ENCODE measurements at regions of chr7 and their contacts with region 1.

Region 1: DNA sequence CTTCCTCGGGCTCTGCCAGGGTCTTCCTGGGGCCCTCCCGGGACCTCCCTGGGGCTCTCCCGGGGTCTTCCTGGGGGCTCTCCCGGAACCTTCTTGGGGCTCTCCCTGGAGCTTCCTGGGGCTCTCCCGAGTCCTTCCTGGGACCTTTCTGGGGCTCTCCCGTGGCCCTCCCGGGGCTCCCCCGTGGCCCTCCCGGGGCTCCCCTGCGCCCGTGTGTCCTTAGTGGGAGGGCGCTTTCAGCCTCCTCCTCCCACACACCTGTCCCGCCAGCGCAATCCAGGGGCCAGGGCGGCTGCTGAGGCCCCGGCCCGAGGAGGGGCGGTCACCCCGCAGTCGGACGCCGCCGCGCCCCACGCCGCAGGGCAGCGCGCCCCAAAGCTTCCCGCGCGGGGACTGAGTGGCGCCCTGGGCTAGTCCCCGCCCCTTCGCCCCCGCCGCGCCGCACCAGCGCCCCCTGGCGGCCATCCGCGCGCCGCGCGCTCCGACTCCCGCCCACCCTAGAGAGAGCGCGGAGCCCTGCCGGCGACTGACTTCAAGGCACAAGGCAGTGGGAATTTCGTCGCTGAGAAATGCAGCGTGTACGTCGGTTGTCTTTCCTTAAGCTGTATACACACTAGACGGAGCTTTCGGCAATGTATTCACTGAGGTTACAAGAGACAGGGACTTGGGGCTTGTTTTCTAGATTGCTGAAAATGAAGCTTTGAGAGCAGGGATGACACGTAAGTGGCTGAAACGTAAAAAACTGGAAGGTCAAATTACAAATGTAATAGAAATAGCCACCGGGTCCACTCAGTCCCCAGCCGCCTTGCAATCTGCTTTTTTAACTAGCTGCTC is 47.1 kb downstream of the INSIG1 start:
- DNase-seq: peak; percentile 83
- H3K4me3 Mint-ChIP-seq: peak overlapping the region; percentile 55
- H3K27ac Mint-ChIP-seq: no peak overlapping the region
- H3K4me1 Mint-ChIP-seq: peaks cover 5% of the 10 kb centered on the region
- H3K27me3 Mint-ChIP-seq: peaks cover 41% of the 10 kb centered on the region

Region 2: GRCh38 chr7:155119801-155120382 is 224.9 kb before region 1 on chr7:
- CTCF ChIA-PET with region 1: no interaction called
- DNase-seq: no peak
- H3K4me3 Mint-ChIP-seq: no peak overlapping the region
- H3K27ac Mint-ChIP-seq: no peak overlapping the region
- H3K4me1 Mint-ChIP-seq: no peaks in the 10 kb centered on the region
- H3K27me3 Mint-ChIP-seq: peaks cover 13% of the 10 kb centered on the region

Region 3: DNA sequence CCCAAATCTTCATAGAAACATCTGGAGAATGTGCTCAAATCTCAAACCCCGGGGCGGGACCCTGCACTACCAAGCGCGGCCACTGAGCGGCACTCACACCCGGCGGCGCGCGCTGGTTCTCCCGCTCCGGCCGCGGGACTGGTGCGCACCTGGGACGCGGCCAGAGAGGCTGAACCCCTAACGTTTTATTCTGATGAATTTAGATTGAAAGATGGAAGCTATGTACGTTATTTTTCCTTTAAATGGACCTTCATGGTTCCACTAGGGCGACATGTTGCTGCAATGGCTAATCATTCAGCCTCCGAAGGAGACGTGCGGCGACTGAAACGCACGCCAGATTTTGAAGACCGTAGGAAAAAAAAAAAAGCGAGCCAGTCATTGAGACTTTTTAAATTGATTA is 154.1 kb before region 1 on chr7:
- CTCF ChIA-PET with region 1: interaction called, 16 read pairs
- DNase-seq: peak; percentile 62
- H3K4me3 Mint-ChIP-seq: no peak overlapping the region
- H3K27ac Mint-ChIP-seq: no peak overlapping the region
- H3K4me1 Mint-ChIP-seq: peaks cover 9% of the 10 kb centered on the region
- H3K27me3 Mint-ChIP-seq: peaks cover 48% of the 10 kb centered on the region

Region 4: DNA sequence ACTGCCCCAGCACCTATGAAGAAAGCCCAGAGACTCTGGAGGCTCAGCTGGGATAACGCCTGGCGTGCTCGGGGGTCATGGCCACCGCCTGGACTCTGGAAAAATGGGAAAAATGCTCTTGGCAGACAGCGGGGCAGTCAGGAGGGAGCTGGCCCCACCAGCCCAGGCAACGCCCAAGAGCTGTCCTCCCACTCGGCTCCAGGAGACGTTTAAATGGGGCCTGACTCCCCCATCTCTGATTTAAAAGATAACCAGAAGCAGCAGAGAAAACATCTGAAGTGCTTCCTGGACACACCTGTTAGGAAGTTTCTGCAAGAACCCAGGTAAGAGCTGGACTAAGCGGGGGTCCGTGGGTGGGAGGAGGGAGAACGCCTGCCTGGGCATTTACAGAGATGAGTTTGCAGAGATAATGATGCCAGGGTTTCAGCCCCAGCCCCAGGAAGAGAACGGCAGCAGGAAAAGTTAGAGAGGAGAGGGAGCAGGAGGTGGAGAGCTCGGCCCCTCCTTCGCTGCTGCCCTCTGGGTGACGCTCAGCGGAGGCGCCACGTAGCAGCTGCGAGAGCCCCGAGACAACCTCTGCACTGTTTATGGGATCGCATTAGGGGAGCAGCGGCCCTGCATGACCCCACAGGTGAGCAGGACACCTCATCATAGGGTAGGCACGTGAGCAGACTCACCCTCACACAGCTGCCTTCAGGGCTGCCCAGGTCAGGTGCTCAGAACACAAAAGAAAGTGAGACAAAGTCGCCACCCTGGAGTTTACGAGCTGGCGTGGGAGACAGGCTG is 130.7 kb before region 1 on chr7:
- CTCF ChIA-PET with region 1: no interaction called
- DNase-seq: no peak
- H3K4me3 Mint-ChIP-seq: no peak overlapping the region
- H3K27ac Mint-ChIP-seq: no peak overlapping the region
- H3K4me1 Mint-ChIP-seq: no peaks in the 10 kb centered on the region
- H3K27me3 Mint-ChIP-seq: peaks cover 43% of the 10 kb centered on the region

Region 5: DNA sequence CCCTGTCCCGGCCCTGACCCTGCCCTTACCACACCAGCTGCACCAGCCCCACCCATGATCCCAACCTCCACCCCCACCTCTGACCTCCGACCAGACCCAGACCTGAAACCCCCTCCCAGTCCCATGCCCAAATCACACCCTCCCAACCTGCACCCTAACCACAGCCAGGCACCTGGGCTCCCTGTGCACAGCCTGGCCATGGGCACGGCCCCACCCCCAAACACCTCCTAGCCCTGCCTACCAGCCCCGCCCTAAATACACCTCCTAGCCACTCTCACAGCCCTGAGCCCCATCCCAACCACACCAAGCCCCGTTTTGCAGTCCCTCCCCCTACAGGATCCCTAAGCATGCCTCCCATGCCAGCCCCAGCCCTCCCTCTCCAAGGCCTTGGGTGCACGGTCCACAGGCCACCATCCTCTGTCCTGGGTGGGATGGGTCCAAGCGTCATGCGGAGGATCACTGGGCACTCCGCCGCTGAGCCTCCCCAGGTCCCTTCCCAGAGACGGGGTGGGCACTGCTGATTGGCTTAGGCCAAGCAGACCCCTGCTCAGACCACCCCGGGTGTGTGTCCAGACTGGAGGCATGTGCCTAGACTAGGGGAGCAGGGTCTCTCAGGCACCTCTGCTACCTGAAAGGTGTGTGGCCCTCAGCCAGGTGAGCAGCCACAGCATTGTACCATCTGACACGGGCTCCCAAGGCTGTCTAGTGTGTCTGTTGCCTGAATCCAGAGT is 17.1 kb before region 1 on chr7:
- CTCF ChIA-PET with region 1: no interaction called
- DNase-seq: no peak
- H3K4me3 Mint-ChIP-seq: no peak overlapping the region
- H3K27ac Mint-ChIP-seq: peak overlapping the region; percentile 61
- H3K4me1 Mint-ChIP-seq: no peaks in the 10 kb centered on the region
- H3K27me3 Mint-ChIP-seq: peaks cover 9% of the 10 kb centered on the region